ENCODE measurements at regions of chr1 and their contacts with region 1.

Region 1: GRCh38 chr1:40625066-40625465 is 40.4 kb downstream of the RIMS3 start:
- DNase-seq: peak; percentile 55
- H3K4me3 ChIP-seq: no peak overlapping the region
- H3K27ac ChIP-seq: no peak overlapping the region
- H3K4me1 ChIP-seq: peaks cover 0 to 17% (median 15%) of the 10 kb centered on the region in 4 donors
- H3K27me3 ChIP-seq: no peaks in the 10 kb centered on the region
- CTCF ChIP-seq: peak in 4 of 5 experiments; percentile 40 to 55 (median 48)
- EP300 ChIP-seq: no peak
- POLR2A ChIP-seq: no peak

Region 2: GRCh38 chr1:39554277-39554676 is 1070.8 kb before region 1 on chr1:
- in situ Hi-C with region 1: no loop called
- intact Hi-C with region 1: no loop called
- DNase-seq: no peak
- H3K4me3 ChIP-seq: no peak overlapping the region
- H3K27ac ChIP-seq: no peak overlapping the region
- H3K4me1 ChIP-seq: peaks cover 0 to 3% (median 0%) of the 10 kb centered on the region in 4 donors
- H3K27me3 ChIP-seq: no peaks in the 10 kb centered on the region
- CTCF ChIP-seq: no peak
- EP300 ChIP-seq: no peak
- POLR2A ChIP-seq: no peak

Region 3: GRCh38 chr1:40508375-40509341 is 116.4 kb before region 1 on chr1 and contains the start of gene EXO5:
- in situ Hi-C with region 1: no loop called
- intact Hi-C with region 1: no loop called
- DNase-seq: peak; percentile 85
- H3K4me3 ChIP-seq: peak within 1 kb of the TSS; percentile 62 to 85 (median 70)
- H3K27ac ChIP-seq: peak within 1 kb of the TSS; percentile 74 to 86 (median 82)
- H3K4me1 ChIP-seq: peaks cover 0 to 17% (median 10%) of the 10 kb centered on the region in 4 donors
- H3K27me3 ChIP-seq: no peaks in the 10 kb centered on the region
- CTCF ChIP-seq: no peak
- EP300 ChIP-seq: no peak
- POLR2A ChIP-seq: peak; percentile 40
- total RNA-seq, gene EXO5: 0.40 to 16.8 (median 6.5) TPM

Region 4: GRCh38 chr1:40951943-40952743 is 327.1 kb after region 1 on chr1:
- in situ Hi-C with region 1: loop called in 1 of 4 experiments (anchors 25 kb)
- intact Hi-C with region 1: loop called (anchors 10 kb)
- DNase-seq: peak; percentile 77
- H3K4me3 ChIP-seq: no peak overlapping the region
- H3K27ac ChIP-seq: no peak overlapping the region
- H3K4me1 ChIP-seq: peaks cover 4 to 15% (median 8%) of the 10 kb centered on the region in 4 donors
- H3K27me3 ChIP-seq: peaks cover 3% of the 10 kb centered on the region
- CTCF ChIP-seq: peak; percentile 86 to 92 (median 89)
- EP300 ChIP-seq: no peak
- POLR2A ChIP-seq: no peak